ENCODE measurements at regions of chr12 and their contacts with region 1.

Region 1: DNA sequence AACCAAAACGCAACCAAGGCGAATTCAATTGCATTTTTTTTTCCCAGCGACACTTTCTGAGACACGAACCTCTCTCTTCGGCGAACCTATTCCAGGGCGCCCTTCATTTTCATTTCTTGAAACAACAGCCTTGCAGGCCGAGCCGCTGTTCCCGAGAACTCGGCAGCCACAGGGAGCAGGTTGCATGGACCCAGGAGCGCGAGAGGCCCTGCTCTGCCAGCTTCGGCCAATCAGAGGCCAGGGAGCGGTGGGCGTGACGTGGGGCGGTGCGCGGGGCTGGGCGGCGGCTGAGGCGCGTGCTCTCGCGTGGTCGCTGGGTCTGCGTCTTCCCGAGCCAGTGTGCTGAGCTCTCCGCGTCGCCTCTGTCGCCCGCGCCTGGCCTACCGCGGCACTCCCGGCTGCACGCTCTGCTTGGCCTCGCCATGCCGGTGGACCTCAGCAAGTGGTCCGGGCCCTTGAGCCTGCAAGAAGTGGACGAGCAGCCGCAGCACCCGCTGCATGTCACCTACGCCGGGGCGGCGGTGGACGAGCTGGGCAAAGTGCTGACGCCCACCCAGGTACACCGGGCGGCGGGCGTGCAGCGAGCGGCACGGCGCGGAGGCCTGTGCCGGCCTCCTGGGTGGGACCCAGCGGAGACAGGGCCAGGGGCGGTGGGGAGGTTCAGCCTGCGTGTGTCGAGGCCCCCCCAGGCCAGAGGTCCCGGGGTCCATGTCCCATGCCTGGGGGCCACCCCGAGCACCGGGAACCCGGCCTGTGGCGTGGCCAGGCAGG is at the start of gene PEBP1:
- DNase-seq: peak; percentile 93 to 98 (median 97)
- ATAC-seq: peak; percentile 99
- H3K4me3 ChIP-seq: peak within 1 kb of the TSS; percentile 80
- H3K27ac ChIP-seq: peak within 1 kb of the TSS; percentile 77
- H3K4me1 ChIP-seq: peaks cover 2 to 27% of the 10 kb centered on the region in 2 experiments; a peak in 3 of 5 replicates
- H3K27me3 ChIP-seq: no peaks in the 10 kb centered on the region
- CTCF ChIP-seq: peak in 1 of 3 experiments; percentile 20; a peak in 1 of 6 replicates
- EP300 ChIP-seq: no peak
- POLR2A ChIP-seq: peak; percentile 86
- RAD21 ChIP-seq: peak in 1 of 2 experiments; percentile 8; a peak in 1 of 4 replicates
- polyA plus RNA-seq, gene PEBP1: 77.3 to 113 TPM

Region 2: DNA sequence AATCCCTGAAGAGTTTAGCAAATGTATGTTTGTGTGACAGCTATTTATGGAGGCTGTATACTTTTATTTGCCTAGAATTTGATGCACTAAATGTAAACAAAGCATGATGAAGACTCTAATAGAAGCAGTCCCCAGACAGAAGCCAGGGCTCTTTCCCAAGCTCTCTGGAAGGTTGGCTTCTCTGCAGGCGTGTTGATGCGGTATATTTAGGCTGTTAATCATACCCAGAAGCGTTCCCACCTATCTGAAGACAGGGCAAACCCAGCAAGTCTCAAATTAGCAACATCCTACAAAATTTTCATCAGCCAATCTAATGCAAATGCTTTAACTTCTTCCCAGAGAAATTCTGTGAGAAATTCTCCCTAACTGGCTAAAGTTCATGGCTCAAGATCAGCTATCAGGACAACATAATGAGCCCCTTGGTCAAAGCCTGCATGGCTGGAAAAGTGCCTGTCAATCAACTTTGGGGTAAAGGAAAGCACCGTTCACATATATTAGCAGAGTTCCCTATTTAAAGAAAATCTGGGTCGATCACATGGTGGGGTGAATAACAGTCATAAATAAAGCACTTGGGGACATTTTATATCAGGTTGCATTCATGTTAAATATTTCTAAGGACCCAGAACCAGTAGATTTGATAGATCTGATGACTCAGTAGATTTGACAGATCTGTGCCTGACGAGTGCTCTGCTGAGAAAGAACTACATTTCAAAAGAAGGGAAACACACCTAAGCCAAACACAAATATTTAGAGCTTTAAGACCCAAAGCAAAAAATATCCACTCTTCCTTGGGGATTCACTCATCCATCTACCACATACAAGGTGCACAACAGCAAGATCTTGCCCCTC is 213.8 kb before region 1 on chr12:
- CTCF ChIA-PET with region 1: no interaction called
- POLR2A ChIA-PET with region 1: no interaction called
- in situ Hi-C with region 1: no loop called
- intact Hi-C with region 1: no loop called
- DNase-seq: no peak
- ATAC-seq: no peak
- H3K4me3 ChIP-seq: no peak overlapping the region
- H3K27ac ChIP-seq: no peak overlapping the region
- H3K4me1 ChIP-seq: no peaks in the 10 kb centered on the region
- H3K27me3 ChIP-seq: peaks cover 12 to 14% of the 10 kb centered on the region in 2 experiments
- CTCF ChIP-seq: no peak
- EP300 ChIP-seq: no peak
- POLR2A ChIP-seq: no peak
- RAD21 ChIP-seq: no peak

Region 3: DNA sequence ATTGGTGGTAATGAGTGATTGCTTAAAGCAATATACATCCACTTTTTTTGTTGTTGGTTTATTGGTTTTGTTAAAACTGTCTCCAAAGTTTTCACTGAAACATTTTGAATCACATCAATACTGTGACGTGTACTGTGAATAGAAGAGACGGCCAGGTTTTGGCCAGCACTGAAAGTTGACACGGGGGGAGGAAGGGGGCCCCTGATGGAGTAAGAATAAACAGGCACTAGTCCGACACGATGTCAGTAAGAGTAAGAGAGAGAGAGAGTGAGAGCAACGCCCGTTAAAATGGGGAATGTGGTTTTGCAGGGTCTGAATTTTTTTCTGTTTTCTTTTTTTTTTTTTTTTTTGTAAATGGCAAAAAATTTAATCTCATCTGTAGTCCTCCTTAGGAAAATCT is 14.7 kb after region 1 on chr12:
- CTCF ChIA-PET with region 1: no interaction called
- POLR2A ChIA-PET with region 1: interaction called, 19 read pairs
- in situ Hi-C with region 1: no loop called
- intact Hi-C with region 1: no loop called
- DNase-seq: no peak
- ATAC-seq: no peak
- H3K4me3 ChIP-seq: no peak overlapping the region
- H3K27ac ChIP-seq: no peak overlapping the region
- H3K4me1 ChIP-seq: 0 out of 5 replicates have a peak, but pooled peaks cover 0 to 3% of the 10 kb centered on the region in 2 experiments
- H3K27me3 ChIP-seq: no peaks in the 10 kb centered on the region
- CTCF ChIP-seq: no peak
- EP300 ChIP-seq: no peak
- POLR2A ChIP-seq: no peak
- RAD21 ChIP-seq: no peak